ENCODE measurements at regions of chr7 and their contacts with region 1.

Region 1: GRCh38 chr7:141785706-141786552 is 4.1 kb upstream of the TAS2R5 start:
- DNase-seq: no peak
- H3K4me3 ChIP-seq: no peak overlapping the region
- H3K27ac ChIP-seq: no peak overlapping the region
- H3K4me1 ChIP-seq: no peaks in the 10 kb centered on the region
- H3K27me3 ChIP-seq: no peaks in the 10 kb centered on the region
- CTCF ChIP-seq: peak in 2 of 3 experiments; percentile 55 to 77; a peak in 2 of 4 replicates
- EP300 ChIP-seq: no peak
- POLR2A ChIP-seq: no peak
- RAD21 ChIP-seq: peak; percentile 64 to 70

Region 2: GRCh38 chr7:141617280-141617679 is 168.6 kb before region 1 on chr7:
- CTCF ChIA-PET with region 1: no interaction called
- POLR2A ChIA-PET with region 1: no interaction called
- DNase-seq: no peak
- H3K4me3 ChIP-seq: no peak overlapping the region
- H3K27ac ChIP-seq: no peak overlapping the region
- H3K4me1 ChIP-seq: no peaks in the 10 kb centered on the region
- H3K27me3 ChIP-seq: no peaks in the 10 kb centered on the region
- CTCF ChIP-seq: no peak
- EP300 ChIP-seq: no peak
- POLR2A ChIP-seq: no peak
- RAD21 ChIP-seq: no peak

Region 3: GRCh38 chr7:141763797-141764196 is 22.1 kb before region 1 on chr7 and contains the start of gene TAS2R3:
- CTCF ChIA-PET with region 1: interaction called, 30 read pairs
- POLR2A ChIA-PET with region 1: interaction called, 3 read pairs
- DNase-seq: no peak
- H3K4me3 ChIP-seq: no peak within 1 kb of the TSS
- H3K27ac ChIP-seq: no peak within 1 kb of the TSS
- H3K4me1 ChIP-seq: no peaks in the 10 kb centered on the region; a peak in 1 of 7 replicates
- H3K27me3 ChIP-seq: no peaks in the 10 kb centered on the region
- CTCF ChIP-seq: no peak
- EP300 ChIP-seq: no peak
- POLR2A ChIP-seq: no peak
- RAD21 ChIP-seq: no peak
- total RNA-seq, gene TAS2R3: 0.59 and 0.99 TPM in 2 replicates